ENCODE measurements at regions of chr9 and their contacts with region 1.

Region 1: DNA sequence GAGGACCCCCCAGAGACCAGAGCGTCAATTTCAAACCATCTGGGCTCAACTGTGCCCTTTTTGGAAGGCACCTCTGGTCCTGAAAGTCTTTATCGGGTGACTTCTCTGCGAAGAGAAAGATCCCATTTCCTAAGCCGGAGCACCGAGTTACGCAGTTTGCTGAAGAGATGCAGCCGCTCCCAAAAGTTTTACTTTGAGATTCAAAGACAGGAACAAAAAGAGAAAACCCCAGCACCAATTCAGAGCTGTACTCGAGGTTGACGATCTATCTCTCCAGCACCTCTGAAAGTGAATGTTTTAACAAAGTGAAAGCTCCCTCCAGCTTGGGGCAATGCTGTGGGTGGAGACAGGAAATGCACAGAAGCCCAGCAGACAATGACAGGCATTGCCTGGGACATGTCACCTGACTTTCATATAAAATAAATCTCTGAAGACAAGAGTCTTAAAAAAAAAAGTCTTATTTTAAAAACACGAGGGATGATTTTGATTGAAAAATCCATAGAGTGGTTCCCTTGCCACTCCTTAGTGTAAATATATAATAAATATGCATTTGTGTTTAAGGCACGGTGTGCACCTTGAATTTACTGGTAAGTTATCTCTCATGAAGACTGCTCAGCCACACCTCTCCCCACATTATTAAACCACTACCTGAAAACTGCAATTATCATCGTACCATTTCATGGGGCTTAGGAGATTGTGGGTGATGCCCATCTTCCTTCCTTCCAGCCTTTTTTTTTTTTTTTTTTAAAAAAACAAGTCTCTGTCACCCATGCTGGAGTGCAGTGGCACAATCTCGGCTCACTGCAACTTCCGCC is 79.9 kb downstream of the FNBP1 start:
- DNase-seq: no peak
- ATAC-seq: peak in 1 of 4 donors; percentile 70
- H3K4me3 ChIP-seq: peak overlapping the region; percentile 62
- H3K27ac ChIP-seq: peak overlapping the region; percentile 81
- H3K4me1 ChIP-seq: peaks cover 2% of the 10 kb centered on the region
- H3K27me3 ChIP-seq: no peaks in the 10 kb centered on the region
- CTCF ChIP-seq: no peak

Region 2: DNA sequence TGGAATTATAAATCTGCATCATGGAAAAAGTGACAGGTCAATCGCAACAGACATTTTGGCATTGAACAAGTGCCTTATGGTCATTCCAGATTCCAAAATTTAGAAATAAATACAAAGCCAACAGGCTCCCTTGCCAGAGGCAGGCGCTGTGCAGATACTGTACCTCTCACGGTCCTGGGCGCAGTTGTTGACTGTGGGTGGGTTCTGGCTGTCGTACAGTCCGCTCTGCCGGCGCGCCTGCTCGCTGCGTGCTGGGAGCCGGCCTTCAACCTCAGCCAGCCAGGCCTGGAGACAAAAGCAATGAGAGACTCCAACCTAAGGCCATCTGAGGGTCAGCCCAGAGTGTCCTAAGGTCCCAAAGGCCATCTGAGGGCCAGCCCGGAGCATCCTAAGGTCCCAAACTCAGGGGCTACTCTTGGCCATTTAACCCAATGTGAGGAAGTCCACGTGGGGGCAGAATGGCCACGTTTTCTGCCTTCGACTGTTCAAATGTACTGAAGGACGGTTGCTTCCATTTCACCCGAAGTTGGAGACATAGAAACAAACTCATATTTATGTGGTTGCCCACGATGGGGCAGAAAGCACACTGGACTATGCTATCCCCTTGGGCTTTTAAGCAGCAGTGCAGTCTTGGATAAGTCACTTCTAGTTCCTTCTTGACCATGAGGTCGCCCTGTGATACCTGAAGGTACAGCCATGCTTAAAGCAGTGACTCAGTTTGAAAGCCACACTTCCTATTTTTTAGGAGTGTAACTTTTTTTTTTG is 62.7 kb before region 1 on chr9:
- intact Hi-C with region 1: no loop called
- DNase-seq: no peak
- ATAC-seq: no peak
- H3K4me3 ChIP-seq: no peak overlapping the region
- H3K27ac ChIP-seq: no peak overlapping the region
- H3K4me1 ChIP-seq: no peaks in the 10 kb centered on the region
- H3K27me3 ChIP-seq: no peaks in the 10 kb centered on the region
- CTCF ChIP-seq: no peak

Region 3: DNA sequence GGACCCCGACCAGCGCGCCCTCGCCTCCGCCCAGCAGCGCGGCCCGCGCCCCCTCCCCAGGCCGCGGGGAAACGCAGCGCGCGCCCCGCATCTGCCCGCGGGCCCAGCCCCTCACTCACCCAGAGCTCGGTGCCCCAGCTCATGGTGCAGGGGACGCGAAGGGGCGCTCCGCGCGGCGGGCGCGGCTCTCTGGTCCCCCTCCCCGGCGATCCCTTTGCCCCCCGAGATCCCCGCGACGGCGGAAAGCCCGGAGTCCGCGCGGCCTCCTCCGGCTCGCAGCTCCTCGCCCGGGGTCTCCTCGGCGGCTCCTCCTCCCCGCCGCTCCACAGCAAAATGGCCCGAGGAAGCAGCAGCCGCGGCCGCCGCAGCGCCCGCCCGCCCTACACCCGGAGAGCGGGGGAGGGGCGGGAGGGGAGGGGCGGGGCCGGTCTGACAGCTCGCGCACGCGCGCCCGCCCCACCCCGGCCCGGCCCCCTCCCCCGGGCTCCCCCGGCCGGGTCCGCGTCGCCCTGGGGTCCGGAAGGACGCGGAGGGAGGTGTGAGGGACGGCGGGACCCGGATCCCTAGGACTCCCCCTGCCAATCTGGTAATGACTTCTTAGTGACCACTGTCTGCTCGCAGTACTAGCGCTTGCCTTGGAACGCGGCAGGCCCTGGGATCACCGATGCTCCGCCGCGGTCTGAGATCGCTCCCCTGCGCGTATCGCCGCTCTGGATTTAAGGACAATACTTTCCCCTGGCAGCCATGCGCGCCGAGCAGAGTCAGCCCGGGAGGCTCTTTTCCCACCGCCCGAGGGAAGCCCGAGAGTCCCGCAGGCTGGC is 79.9 kb after region 1 on chr9 and contains the start of gene FNBP1:
- intact Hi-C with region 1: loop called in 1 of 2 experiments (anchors 10 kb)
- DNase-seq: peak; percentile 80 to 89
- ATAC-seq: peak; percentile 94 to 96 (median 94)
- H3K4me3 ChIP-seq: peak within 1 kb of the TSS; percentile 98
- H3K27ac ChIP-seq: peak within 1 kb of the TSS; percentile 86
- H3K4me1 ChIP-seq: peaks cover 10% of the 10 kb centered on the region
- H3K27me3 ChIP-seq: no peaks in the 10 kb centered on the region
- CTCF ChIP-seq: no peak
- total RNA-seq, gene FNBP1: 23.7 to 30.1 (median 27.5) TPM

Measured in psoas muscle (tissue), 8 donors.